ENCODE measurements at regions of chr12 and their contacts with region 1.

Region 1: DNA sequence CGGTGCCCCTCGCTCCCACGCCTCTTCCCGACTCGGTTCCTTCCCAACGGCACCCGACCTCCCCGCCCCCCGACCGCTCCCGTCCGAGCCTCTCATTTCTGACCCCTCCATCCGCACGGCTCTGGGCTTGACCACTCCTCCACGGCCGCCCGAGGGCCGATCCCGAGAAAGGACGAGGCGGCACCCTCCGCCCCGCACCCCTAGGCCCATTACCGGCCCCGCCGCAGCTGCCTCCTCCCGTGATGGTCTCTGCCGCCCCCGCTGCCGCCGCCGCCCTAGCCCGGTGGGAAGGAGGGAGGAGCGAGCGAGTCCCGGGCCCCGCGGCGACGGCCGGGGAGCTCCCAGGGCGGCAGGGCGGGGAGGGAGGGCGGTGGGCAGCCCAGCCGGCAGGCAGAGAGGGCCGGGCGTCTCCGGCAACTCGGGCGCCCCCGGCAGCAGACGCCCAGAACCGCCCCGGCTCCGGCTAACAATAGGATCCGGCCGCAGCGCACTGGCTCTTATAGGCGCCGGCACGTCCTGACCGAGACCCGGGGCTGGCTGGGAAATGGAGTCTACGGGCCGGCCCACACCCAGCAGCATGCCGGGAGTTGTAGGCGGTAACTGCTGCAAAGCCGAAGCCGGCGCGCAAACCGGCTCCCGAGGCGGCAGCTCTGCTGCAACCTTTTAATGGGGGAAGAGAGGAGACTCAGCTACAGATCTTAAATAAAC is at the start of gene CSRNP2:
- DNase-seq: peak; percentile 96 to 98
- ATAC-seq: peak; percentile 99
- H3K4me3 ChIP-seq: peak within 1 kb of the TSS; percentile 98
- H3K27ac ChIP-seq: peak within 1 kb of the TSS; percentile 96 to 97
- H3K4me1 ChIP-seq: peaks cover 11% of the 10 kb centered on the region; the same call in 2 of the 3 replicates
- CTCF ChIP-seq: no peak
- EP300 ChIP-seq: no peak
- POLR2A ChIP-seq: peak; percentile 99
- RAD21 ChIP-seq: 0 out of 5 replicates have a peak, but pooled peaks of 1 of the 2 experiments have one; percentile 15
- polyA plus RNA-seq, gene CSRNP2: 20.3 and 21.6 TPM in 2 replicates

Region 2: GRCh38 chr12:50550530-50551223 is 532.6 kb before region 1 on chr12:
- CTCF ChIA-PET with region 1: no interaction called
- POLR2A ChIA-PET with region 1: no interaction called
- DNase-seq: no peak
- ATAC-seq: peak in 1 of 2 experiments; percentile 37; a peak in 2 of 6 replicates
- H3K4me3 ChIP-seq: no peak overlapping the region
- H3K27ac ChIP-seq: peak overlapping the region; percentile 0 to 75; a peak in 3 of 6 replicates
- H3K4me1 ChIP-seq: peaks cover 48% of the 10 kb centered on the region
- CTCF ChIP-seq: no peak
- EP300 ChIP-seq: no peak
- POLR2A ChIP-seq: no peak
- RAD21 ChIP-seq: no peak

Region 3: DNA sequence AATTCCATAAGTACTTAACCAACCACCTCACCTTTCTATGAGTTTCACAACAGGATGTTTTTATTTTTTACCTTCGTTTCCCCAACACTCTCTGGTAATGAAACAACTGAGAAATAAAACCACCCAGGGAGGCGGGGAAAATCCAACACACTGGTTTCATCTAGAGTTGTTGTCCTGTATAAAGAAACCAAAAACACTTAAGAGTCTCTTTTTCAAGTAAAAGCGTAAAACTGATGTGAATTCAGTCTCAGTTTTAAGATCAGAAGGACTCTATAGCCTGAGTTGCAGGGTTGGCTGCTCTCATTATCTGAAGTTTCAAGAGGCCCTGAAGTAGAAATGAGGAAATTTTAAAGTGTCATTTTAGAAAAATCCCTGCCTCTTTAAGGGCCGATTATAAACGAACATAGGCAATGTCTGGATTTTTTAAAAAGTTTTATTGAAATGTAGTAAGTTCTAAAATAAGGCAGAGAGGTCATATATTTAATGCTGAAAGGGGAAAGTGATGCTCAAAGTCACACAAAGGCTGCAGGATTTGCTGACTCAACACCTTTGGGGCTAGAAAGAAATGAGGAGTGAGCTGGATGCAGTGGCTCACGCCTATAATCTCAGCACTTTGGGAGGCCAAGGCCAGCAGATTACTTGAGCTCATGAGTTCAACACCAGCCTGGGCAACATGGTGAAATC is 103.8 kb before region 1 on chr12:
- CTCF ChIA-PET with region 1: no interaction called
- POLR2A ChIA-PET with region 1: no interaction called
- DNase-seq: no peak
- ATAC-seq: no peak
- H3K4me3 ChIP-seq: no peak overlapping the region
- H3K27ac ChIP-seq: no peak overlapping the region
- H3K4me1 ChIP-seq: no peaks in the 10 kb centered on the region; the same call in 2 of the 3 replicates
- CTCF ChIP-seq: no peak
- EP300 ChIP-seq: no peak
- POLR2A ChIP-seq: no peak
- RAD21 ChIP-seq: no peak

Region 4: DNA sequence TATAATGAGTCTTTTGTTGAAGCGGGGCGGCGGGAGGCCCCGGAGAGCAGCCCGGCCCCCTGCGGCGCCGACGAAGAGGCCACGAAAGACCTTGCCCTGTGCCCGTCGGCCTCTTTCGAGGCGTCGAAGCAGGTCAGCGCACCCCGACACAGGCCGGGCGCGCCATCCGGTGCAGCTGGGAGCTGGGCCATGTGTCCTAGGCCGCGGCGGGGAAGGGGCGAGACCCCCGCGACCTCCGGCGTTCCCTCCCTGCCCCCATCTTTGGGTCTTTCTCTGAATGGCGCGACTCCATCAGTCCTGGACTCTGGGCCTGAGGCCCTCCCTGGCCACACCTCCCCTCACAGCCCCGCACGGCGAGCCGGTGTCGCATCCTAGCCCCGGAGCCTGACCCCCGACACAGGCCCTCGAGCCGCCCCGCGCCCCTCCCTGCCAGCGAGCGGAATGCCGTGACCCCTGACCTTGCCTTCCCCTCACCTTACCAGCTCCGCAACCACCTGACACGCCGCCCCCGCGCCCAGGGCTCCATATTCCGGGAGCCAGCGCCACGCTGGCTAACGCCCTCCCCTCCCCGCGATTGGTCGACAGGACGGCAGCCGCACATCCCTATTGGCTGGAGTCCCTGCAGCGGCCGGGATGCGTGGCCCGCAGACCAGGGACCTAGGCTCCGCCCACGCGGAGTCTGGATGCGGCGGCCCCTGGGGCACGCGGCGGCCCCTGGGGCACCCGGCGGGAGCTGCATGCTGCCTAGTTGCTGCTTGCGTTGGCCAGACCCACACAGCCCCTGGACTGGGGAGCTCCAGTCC is 57.2 kb before region 1 on chr12 and contains the start of gene SLC11A2:
- CTCF ChIA-PET with region 1: interaction called, 3 read pairs
- POLR2A ChIA-PET with region 1: interaction called, 16 read pairs
- DNase-seq: peak; percentile 96 to 98
- ATAC-seq: peak; percentile 96 to 98
- H3K4me3 ChIP-seq: peak within 1 kb of the TSS; percentile 64
- H3K27ac ChIP-seq: peak within 1 kb of the TSS; percentile 84 to 93
- H3K4me1 ChIP-seq: peaks cover 36% of the 10 kb centered on the region
- CTCF ChIP-seq: no peak
- EP300 ChIP-seq: no peak
- POLR2A ChIP-seq: peak; percentile 92
- RAD21 ChIP-seq: no peak
- polyA plus RNA-seq, gene SLC11A2: 80.7 and 82.6 TPM in 2 replicates

Region 5: GRCh38 chr12:51056244-51056643 is 27.0 kb before region 1 on chr12:
- CTCF ChIA-PET with region 1: interaction called, 3 read pairs
- POLR2A ChIA-PET with region 1: interaction called, 10 read pairs
- DNase-seq: peak in 1 of 2 experiments; percentile 21
- ATAC-seq: 0 out of 6 replicates have a peak, but pooled peaks of 1 of the 2 experiments have one; percentile 39
- H3K4me3 ChIP-seq: no peak overlapping the region
- H3K27ac ChIP-seq: no peak overlapping the region
- H3K4me1 ChIP-seq: no peaks in the 10 kb centered on the region
- CTCF ChIP-seq: no peak
- EP300 ChIP-seq: no peak
- POLR2A ChIP-seq: no peak
- RAD21 ChIP-seq: no peak

Region 6: DNA sequence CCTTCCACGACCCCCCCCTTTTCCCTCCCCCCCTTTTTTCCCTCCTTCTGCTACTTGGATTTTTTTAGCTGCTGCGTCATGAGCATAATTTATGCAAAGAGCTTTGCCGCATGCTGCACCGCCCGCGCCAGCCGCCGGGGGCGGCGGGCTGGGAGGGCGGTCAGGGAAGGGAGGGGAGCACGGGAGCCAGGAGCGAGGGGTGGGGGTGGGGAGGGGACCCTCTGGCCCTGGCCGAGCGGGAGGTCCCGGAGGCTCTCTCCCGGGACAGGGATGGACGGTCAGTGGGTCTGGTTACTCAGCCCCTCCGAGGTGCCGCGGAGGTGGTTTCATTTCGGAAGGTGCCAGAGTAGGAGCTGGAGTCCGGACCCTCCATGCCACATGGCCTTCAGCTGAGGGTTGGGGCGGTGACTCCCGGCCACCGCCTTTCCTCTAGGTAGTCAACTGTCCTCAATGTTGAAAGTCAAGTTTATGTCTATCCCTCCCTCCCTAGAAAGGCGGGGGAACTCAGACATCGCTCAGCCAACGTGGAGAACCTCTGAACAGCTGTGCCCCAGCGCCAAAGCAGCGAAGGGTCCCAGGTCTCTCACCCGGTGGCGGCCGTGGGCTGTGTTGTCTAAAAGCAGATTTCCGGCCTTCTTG is 134.8 kb after region 1 on chr12 and contains the start of gene POU6F1:
- CTCF ChIA-PET with region 1: no interaction called
- POLR2A ChIA-PET with region 1: interaction called, 28 read pairs
- DNase-seq: peak; percentile 77 to 94
- ATAC-seq: peak; percentile 88 to 94
- H3K4me3 ChIP-seq: peak within 1 kb of the TSS; percentile 82
- H3K27ac ChIP-seq: peak within 1 kb of the TSS; percentile 96 to 97
- H3K4me1 ChIP-seq: peaks cover 21% of the 10 kb centered on the region
- CTCF ChIP-seq: no peak
- EP300 ChIP-seq: no peak
- POLR2A ChIP-seq: peak; percentile 22; the same call in 1 of the 2 replicates
- RAD21 ChIP-seq: no peak
- polyA plus RNA-seq, gene POU6F1: 1.3 and 1.7 TPM in 2 replicates

Region 7: GRCh38 chr12:51238510-51239334 is 155.4 kb after region 1 on chr12 and contains the start of gene DAZAP2:
- CTCF ChIA-PET with region 1: no interaction called
- POLR2A ChIA-PET with region 1: interaction called, 10 read pairs
- DNase-seq: peak; percentile 94 to 98
- ATAC-seq: peak; percentile 97
- H3K4me3 ChIP-seq: peak within 1 kb of the TSS; percentile 90
- H3K27ac ChIP-seq: peak within 1 kb of the TSS; percentile 99 to 100
- H3K4me1 ChIP-seq: peaks cover 15% of the 10 kb centered on the region
- CTCF ChIP-seq: no peak
- EP300 ChIP-seq: no peak
- POLR2A ChIP-seq: peak; percentile 75
- RAD21 ChIP-seq: 0 out of 5 replicates have a peak, but pooled peaks of 1 of the 2 experiments have one; percentile 15
- polyA plus RNA-seq, gene DAZAP2: 375 and 459 TPM in 2 replicates

Region 8: GRCh38 chr12:51307655-51308593 is 224.6 kb after region 1 on chr12:
- CTCF ChIA-PET with region 1: no interaction called
- POLR2A ChIA-PET with region 1: no interaction called
- DNase-seq: peak; percentile 89 to 91
- ATAC-seq: peak; percentile 98 to 99
- H3K4me3 ChIP-seq: peak overlapping the region; percentile 5; the same call in 1 of the 3 replicates
- H3K27ac ChIP-seq: peak overlapping the region; percentile 73 to 86
- H3K4me1 ChIP-seq: peaks cover 23% of the 10 kb centered on the region
- CTCF ChIP-seq: no peak
- EP300 ChIP-seq: no peak
- POLR2A ChIP-seq: no peak
- RAD21 ChIP-seq: no peak